PC-9 (cell line): ENCODE measurements at regions of chr15 and their contacts with region 1.

Region 1: DNA sequence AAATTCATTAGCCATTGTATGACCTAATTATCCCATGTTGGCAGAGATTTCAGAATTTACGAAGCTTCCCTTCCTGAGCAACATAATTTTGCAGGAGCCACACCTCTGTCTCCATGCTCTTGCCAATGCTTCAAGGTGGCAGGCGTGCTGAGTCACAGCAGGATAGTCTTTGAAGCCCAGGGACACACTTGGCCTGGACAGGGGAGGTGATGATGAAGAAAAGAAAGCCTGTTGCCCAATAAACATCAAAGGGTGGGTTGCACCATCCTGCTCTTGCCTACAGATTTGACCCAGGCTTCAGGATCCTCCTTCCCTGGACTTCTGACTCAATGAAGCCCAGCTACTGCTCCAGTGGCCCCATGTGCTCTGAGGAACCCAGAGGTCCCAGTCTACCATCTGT is 117.1 kb downstream of the MINAR1 start:
- DNase-seq: no peak
- H3K4me3 ChIP-seq: no peak overlapping the region
- H3K27ac ChIP-seq: no peak overlapping the region
- H3K4me1 ChIP-seq: no peaks in the 10 kb centered on the region
- H3K27me3 ChIP-seq: peaks cover 75% of the 10 kb centered on the region
- CTCF ChIP-seq: no peak

Region 2: DNA sequence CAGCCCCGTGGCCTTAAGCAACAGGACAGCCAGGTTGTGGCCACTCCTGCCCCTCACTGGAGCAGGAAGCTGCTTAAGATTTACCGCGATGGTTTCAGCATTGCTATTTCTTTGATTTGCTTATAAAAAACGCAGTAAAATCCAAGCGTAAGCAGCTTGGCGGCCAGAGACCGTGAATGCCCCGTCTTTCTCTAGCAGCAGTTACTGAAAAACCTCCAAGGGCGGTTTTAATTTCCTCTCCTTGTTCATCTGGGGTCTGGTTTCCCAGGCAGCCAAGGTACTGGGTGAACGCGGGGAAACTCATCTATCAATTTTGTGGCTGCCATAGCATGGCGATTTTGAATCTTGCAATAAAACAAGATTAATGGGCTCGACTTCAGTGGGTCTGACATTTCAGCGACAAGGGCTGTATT is 13.2 kb after region 1 on chr15:
- CTCF ChIA-PET with region 1: no interaction called
- POLR2A ChIA-PET with region 1: no interaction called
- intact Hi-C with region 1: no loop called
- DNase-seq: no peak
- H3K4me3 ChIP-seq: no peak overlapping the region
- H3K27ac ChIP-seq: no peak overlapping the region
- H3K4me1 ChIP-seq: no peaks in the 10 kb centered on the region
- H3K27me3 ChIP-seq: peaks cover 44% of the 10 kb centered on the region
- CTCF ChIP-seq: no peak

Region 3: DNA sequence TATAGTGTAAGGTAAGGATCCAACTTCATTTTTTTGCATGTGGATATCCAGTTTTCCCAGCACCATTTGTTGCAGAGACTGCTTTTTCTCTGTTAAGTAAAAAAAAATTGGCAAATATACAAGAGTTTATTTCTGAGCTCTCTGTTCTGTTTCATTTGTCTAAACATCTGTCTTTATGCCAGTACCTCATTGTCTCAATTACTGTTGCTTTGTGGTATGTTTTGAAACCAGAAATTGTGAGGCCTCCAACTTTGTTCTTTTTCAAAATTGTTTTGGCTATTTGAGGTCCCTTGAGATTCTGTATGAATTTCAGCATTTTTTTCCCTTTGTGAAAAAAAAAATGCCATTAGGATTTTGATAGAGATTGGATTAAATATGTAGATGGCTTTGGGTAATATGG is 33.5 kb after region 1 on chr15:
- CTCF ChIA-PET with region 1: no interaction called
- POLR2A ChIA-PET with region 1: no interaction called
- intact Hi-C with region 1: no loop called
- DNase-seq: no peak
- H3K4me3 ChIP-seq: no peak overlapping the region
- H3K27ac ChIP-seq: no peak overlapping the region
- H3K4me1 ChIP-seq: no peaks in the 10 kb centered on the region
- H3K27me3 ChIP-seq: peaks cover 19% of the 10 kb centered on the region
- CTCF ChIP-seq: no peak

Region 4: DNA sequence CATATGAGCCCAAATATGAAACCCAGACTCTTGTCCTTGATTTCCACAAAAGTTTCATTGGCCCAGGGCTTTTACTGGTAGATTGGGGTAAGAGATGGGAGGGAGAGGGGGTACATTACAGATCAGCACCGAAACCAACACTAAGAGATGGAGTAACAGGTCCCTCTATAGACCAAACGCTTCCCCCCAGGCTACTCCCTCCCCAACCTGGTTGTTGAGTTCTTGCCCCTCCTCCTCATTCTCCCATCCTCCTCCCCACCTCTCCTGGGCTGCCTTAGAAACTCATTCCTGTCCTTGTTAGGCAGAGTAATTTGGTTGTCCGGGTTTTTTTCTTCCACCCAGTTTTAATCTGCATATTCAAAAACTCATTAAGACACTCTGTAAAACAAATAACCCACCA is 1366.3 kb after region 1 on chr15:
- CTCF ChIA-PET with region 1: interaction called, 10 read pairs
- POLR2A ChIA-PET with region 1: no interaction called
- intact Hi-C with region 1: no loop called
- DNase-seq: no peak
- H3K4me3 ChIP-seq: no peak overlapping the region
- H3K27ac ChIP-seq: peak overlapping the region; percentile 67; the same call in 1 of the 2 replicates
- H3K4me1 ChIP-seq: peaks cover 17% of the 10 kb centered on the region
- H3K27me3 ChIP-seq: no peaks in the 10 kb centered on the region
- CTCF ChIP-seq: no peak